Activated naive CD4-positive, alpha-beta T cell treated with anti-CD3 and anti-CD28 coated beads, Interleukin-2, amount 10 ng/mL, durations not matched to agents 7 days and 5 days (primary cell): ENCODE measurements at regions of chr5 and their contacts with region 1.

Region 1: DNA sequence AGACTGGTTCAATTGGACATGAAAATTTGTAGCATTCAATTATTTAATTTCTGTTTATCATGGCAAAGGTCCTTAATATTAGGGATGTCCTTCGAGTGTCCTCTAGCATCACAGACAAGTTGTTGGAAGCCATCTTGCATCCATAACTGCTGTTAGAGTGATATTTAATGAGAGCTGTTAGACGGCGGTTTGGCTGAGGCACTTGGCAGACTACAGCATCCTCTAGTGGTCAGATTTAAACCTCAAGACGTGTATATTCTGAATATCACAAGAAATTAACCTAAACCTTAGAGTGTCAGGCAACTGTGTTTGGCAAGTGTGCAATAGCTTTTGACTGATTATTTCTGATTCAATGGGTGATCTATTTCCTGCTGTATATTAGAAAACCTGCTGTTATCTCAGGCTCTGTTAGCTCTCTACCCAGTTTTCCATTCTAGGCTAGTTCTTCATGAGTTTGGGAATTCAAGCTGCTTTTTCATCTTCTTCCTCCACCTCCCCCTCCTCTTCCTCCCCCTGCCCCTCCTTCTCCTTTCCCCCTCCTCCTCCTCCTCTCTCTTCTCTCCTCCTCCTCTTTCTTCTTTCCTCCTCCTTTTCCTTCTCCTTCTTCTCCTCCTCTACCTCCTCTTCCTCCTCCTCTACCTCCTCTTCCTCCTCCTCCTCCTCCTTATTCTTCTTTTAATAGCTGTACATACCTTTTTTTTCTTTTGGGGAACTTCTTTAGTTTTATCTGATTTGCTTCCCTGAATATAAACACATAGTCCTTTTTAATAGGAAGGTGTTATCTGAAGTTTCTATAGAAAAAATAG is 8.6 kb downstream of the SPINK1 start:
- DNase-seq: peak; percentile 29
- H3K4me3 Mint-ChIP-seq: no peak overlapping the region
- H3K27ac Mint-ChIP-seq: no peak overlapping the region
- H3K4me1 Mint-ChIP-seq: no peaks in the 10 kb centered on the region
- H3K27me3 Mint-ChIP-seq: no peaks in the 10 kb centered on the region

Region 2: DNA sequence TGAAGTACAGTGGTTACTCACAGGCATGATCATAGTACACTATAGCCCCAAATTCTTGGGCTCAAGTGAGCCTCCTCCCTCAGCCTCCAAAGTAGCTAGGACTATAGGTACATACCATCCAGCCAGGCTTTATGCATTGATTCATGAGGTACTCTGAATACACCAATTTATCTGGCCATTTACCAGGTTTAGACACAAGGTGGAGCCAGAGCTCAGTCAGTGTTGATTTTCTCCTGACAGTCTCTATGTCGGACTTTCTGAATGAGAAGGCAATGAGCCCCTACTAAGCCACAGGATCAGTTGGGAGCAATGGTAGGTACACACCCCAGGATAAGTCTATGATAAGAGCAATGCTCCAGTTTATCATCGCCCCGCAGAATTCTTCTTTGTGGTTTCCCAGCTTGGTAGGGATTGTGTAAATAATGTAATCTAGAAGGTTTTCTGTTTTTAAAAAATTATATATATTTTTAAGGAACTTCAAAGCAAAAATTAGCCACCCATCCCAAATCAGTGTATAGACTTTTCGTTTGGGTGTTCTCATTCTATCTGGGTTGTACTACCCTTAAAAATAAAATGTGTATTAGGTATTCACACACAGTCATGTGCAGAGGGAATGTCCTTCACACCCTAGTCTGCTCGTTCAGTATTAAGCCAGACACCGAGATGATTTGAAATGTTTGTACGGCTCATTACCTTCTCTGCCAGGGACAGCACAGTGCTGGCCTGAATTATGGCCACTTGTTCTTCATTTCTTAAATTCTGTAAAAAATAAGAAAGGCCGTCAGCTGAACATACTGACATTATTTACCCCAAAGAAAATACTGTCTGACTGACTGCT is 194.6 kb before region 1 on chr5:
- CTCF ChIA-PET with region 1: interaction called, 39 read pairs
- DNase-seq: peak; percentile 48
- H3K4me3 Mint-ChIP-seq: no peak overlapping the region
- H3K27ac Mint-ChIP-seq: no peak overlapping the region
- H3K4me1 Mint-ChIP-seq: no peaks in the 10 kb centered on the region
- H3K27me3 Mint-ChIP-seq: peaks cover 4% of the 10 kb centered on the region